ENCODE measurements at regions of chr18 and their contacts with region 1.

Region 1: GRCh38 chr18:47404845-47405244 is 153.4 kb upstream of the SKOR2 start:
- DNase-seq: no peak
- ATAC-seq: no peak
- H3K4me3 ChIP-seq: no peak overlapping the region
- H3K27ac ChIP-seq: no peak overlapping the region
- H3K4me1 ChIP-seq: no peaks in the 10 kb centered on the region
- H3K27me3 ChIP-seq: peaks cover 0 to 2% (median 0%) of the 10 kb centered on the region in 9 donors
- CTCF ChIP-seq: no peak
- POLR2A ChIP-seq: no peak

Region 2: GRCh38 chr18:47343291-47343690 is 61.6 kb before region 1 on chr18:
- intact Hi-C with region 1: loop called in 1 of 10 experiments (anchors 10 kb)
- DNase-seq: no peak
- ATAC-seq: no peak
- H3K4me3 ChIP-seq: no peak overlapping the region
- H3K27ac ChIP-seq: no peak overlapping the region
- H3K4me1 ChIP-seq: no peaks in the 10 kb centered on the region
- H3K27me3 ChIP-seq: no peaks in the 10 kb centered on the region
- CTCF ChIP-seq: no peak
- POLR2A ChIP-seq: no peak

Region 3: GRCh38 chr18:47545613-47546012 is 140.8 kb after region 1 on chr18:
- intact Hi-C with region 1: no loop called
- DNase-seq: no peak
- ATAC-seq: no peak
- H3K4me3 ChIP-seq: no peak overlapping the region
- H3K27ac ChIP-seq: no peak overlapping the region
- H3K4me1 ChIP-seq: peaks cover 0 to 8% (median 0%) of the 10 kb centered on the region in 12 donors
- H3K27me3 ChIP-seq: peaks cover 0 to 48% (median 12%) of the 10 kb centered on the region in 9 donors
- CTCF ChIP-seq: no peak
- POLR2A ChIP-seq: no peak

Region 4: DNA sequence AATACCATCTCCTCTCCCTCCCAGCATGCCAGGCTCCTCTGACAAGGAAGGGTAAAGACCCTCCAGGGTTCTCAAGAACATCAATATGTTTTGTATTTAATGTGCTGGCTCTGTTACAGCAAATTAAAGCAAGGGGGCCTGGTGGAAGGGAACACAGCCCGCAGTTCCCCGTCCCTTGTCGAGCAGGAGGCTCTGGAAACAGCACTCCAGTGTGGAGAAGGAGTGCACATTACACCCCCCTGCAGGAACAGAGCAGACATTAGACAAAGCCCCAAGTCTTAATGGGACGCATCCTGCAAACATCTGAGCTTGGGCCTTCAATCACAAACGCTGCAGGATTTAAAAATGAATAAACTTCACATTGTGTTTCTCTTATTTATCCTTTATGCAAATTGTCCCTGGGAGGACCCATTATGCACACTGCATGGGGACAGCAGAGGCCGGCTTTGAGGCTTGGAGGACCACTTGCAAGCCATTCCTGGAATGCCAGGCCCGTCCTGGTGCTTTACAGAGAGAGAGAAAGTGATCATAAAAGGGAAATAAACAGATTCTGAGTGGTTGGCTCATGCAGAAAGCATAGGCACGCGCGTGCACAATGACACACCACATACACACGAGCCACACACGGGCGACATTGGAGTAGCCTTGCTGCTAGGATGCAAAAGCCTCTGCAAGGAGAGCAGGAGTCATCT is 196.9 kb after region 1 on chr18:
- intact Hi-C with region 1: no loop called
- DNase-seq: no peak
- ATAC-seq: no peak
- H3K4me3 ChIP-seq: no peak overlapping the region
- H3K27ac ChIP-seq: no peak overlapping the region
- H3K4me1 ChIP-seq: no peaks in the 10 kb centered on the region
- H3K27me3 ChIP-seq: peaks cover 0 to 6% (median 0%) of the 10 kb centered on the region in 9 donors
- CTCF ChIP-seq: no peak
- POLR2A ChIP-seq: no peak

Region 5: GRCh38 chr18:47726550-47726949 is 321.7 kb after region 1 on chr18:
- intact Hi-C with region 1: loop called in 1 of 10 experiments (anchors 5 kb)
- DNase-seq: no peak
- ATAC-seq: no peak
- H3K4me3 ChIP-seq: no peak overlapping the region
- H3K27ac ChIP-seq: no peak overlapping the region
- H3K4me1 ChIP-seq: no peaks in the 10 kb centered on the region
- H3K27me3 ChIP-seq: peaks cover 0 to 45% (median 0%) of the 10 kb centered on the region in 9 donors
- CTCF ChIP-seq: no peak
- POLR2A ChIP-seq: no peak

Measured in heart left ventricle (tissue), 16 donors.